Psoas muscle (tissue), 8 donors: ENCODE measurements at regions of chr15 and their contacts with region 1.

Region 1: GRCh38 chr15:62403164-62403809 is 238.2 kb upstream of the C2CD4B start:
- DNase-seq: no peak
- ATAC-seq: peak; percentile 81 to 88 (median 84)
- H3K4me3 ChIP-seq: no peak overlapping the region
- H3K27ac ChIP-seq: peak overlapping the region; percentile 81
- H3K4me1 ChIP-seq: peaks cover 41% of the 10 kb centered on the region
- H3K27me3 ChIP-seq: no peaks in the 10 kb centered on the region
- CTCF ChIP-seq: no peak

Region 2: GRCh38 chr15:62444104-62445022 is 41.1 kb after region 1 on chr15:
- intact Hi-C with region 1: loop called in 1 of 2 experiments (anchors 5 kb)
- DNase-seq: peak; percentile 51 to 61
- ATAC-seq: peak; percentile 16 to 68 (median 54)
- H3K4me3 ChIP-seq: no peak overlapping the region
- H3K27ac ChIP-seq: peak overlapping the region; percentile 37
- H3K4me1 ChIP-seq: peaks cover 37% of the 10 kb centered on the region
- H3K27me3 ChIP-seq: no peaks in the 10 kb centered on the region
- CTCF ChIP-seq: no peak

Region 3: GRCh38 chr15:62742409-62743171 is 339.3 kb after region 1 on chr15:
- intact Hi-C with region 1: no loop called
- DNase-seq: peak; percentile 70 to 83
- ATAC-seq: peak; percentile 61 to 83 (median 66)
- H3K4me3 ChIP-seq: no peak overlapping the region
- H3K27ac ChIP-seq: peak overlapping the region; percentile 24
- H3K4me1 ChIP-seq: peaks cover 10% of the 10 kb centered on the region
- H3K27me3 ChIP-seq: no peaks in the 10 kb centered on the region
- CTCF ChIP-seq: peak; percentile 74